WTC11 (cell line): ENCODE measurements at regions of chr19 and their contacts with region 1.

Region 1: GRCh38 chr19:34838753-34839431 is 65.9 kb upstream of the ZNF599 start:
- DNase-seq: peak; percentile 89
- ATAC-seq: peak; percentile 87
- H3K4me3 Mint-ChIP-seq: peak overlapping the region; percentile 75
- H3K27ac Mint-ChIP-seq: no peak overlapping the region
- H3K4me1 Mint-ChIP-seq: peaks cover 19% of the 10 kb centered on the region
- H3K27me3 Mint-ChIP-seq: peaks cover 21% of the 10 kb centered on the region
- CTCF ChIP-seq: peak; percentile 67

Region 2: GRCh38 chr19:34825212-34825611 is 13.7 kb before region 1 on chr19:
- CTCF ChIA-PET with region 1: interaction called, 17 read pairs
- POLR2A ChIA-PET with region 1: no interaction called
- DNase-seq: no peak
- ATAC-seq: no peak
- H3K4me3 Mint-ChIP-seq: no peak overlapping the region
- H3K27ac Mint-ChIP-seq: no peak overlapping the region
- H3K4me1 Mint-ChIP-seq: no peaks in the 10 kb centered on the region
- H3K27me3 Mint-ChIP-seq: peaks cover 5% of the 10 kb centered on the region; the same call in 1 of the 2 replicates
- CTCF ChIP-seq: no peak

Region 3: DNA sequence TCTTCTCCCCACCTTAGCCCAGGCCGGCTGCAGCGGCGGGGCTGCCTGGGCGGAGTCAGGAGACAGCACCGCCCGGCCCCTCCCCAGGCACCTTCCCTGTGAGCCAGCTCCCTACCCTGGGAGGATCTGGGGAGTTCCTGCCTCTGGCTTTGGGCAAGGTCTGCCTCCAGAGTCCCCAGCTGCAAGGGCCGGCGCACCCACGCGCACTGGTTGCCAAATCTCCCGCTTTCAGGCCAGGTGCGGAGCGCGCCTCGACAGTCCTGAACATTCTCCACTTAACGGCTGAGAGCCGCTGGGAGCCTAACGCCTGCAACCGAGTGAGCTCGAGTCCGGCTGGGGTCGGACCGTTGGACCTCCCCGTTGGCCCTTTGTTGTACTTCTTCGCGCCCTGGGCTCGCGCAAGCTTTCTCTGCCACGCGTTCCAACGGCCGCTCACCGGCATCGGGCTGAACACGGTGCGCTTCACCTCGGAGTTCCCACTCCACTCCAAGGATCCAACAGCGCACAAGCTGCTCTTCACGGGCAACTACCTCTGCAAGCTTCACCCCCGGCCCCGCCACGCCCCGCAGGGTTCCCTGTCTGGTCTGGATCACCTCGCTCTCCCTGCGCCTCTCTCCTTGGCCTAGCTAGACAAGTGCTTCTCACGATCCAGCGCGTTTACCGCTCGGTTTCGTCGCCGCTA is 66.1 kb after region 1 on chr19:
- CTCF ChIA-PET with region 1: interaction called, 38 read pairs
- POLR2A ChIA-PET with region 1: interaction called, 3 read pairs
- DNase-seq: peak; percentile 52
- ATAC-seq: peak; percentile 84
- H3K4me3 Mint-ChIP-seq: peak overlapping the region; percentile 80
- H3K27ac Mint-ChIP-seq: no peak overlapping the region
- H3K4me1 Mint-ChIP-seq: peaks cover 14% of the 10 kb centered on the region
- H3K27me3 Mint-ChIP-seq: peaks cover 82% of the 10 kb centered on the region
- CTCF ChIP-seq: no peak

Region 4: DNA sequence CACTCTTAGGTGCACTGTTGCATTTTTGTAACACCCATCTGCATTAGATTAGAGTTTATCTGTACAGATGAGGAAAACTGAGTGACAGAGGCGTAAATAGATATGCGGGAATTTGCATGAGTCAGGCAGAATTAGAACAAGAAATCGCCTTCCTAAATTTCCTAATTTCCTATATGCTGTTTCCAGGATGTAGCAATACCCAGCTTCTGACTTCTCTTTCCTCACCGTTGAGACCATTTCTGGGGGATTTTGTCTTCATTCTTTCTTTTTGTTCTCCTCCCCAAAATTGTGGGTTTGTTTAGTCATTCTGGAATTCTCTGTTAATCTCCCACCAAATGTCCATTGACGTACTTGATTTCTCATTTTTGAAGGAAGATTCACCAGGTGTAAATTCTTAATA is 135.8 kb after region 1 on chr19:
- CTCF ChIA-PET with region 1: interaction called, 17 read pairs
- POLR2A ChIA-PET with region 1: no interaction called
- DNase-seq: no peak
- ATAC-seq: no peak
- H3K4me3 Mint-ChIP-seq: no peak overlapping the region
- H3K27ac Mint-ChIP-seq: no peak overlapping the region
- H3K4me1 Mint-ChIP-seq: peaks cover 31% of the 10 kb centered on the region
- H3K27me3 Mint-ChIP-seq: peaks cover 17% of the 10 kb centered on the region
- CTCF ChIP-seq: no peak

Region 5: GRCh38 chr19:35013031-35013819 is 174.3 kb after region 1 on chr19:
- CTCF ChIA-PET with region 1: interaction called, 25 read pairs
- POLR2A ChIA-PET with region 1: no interaction called
- DNase-seq: peak; percentile 89
- ATAC-seq: peak; percentile 81
- H3K4me3 Mint-ChIP-seq: no peak overlapping the region
- H3K27ac Mint-ChIP-seq: peak overlapping the region; percentile 87; the same call in 1 of the 2 replicates
- H3K4me1 Mint-ChIP-seq: peaks cover 11% of the 10 kb centered on the region; the same call in 1 of the 2 replicates
- H3K27me3 Mint-ChIP-seq: no peaks in the 10 kb centered on the region
- CTCF ChIP-seq: peak; percentile 98